ENCODE measurements at regions of chr15 and their contacts with region 1.

Region 1: GRCh38 chr15:20356444-20356910 is 185.1 kb downstream of the GOLGA6L6 start:
- H3K4me3 ChIP-seq: peak overlapping the region; percentile 19
- H3K27ac ChIP-seq: no peak overlapping the region
- H3K4me1 ChIP-seq: no peaks in the 10 kb centered on the region
- CTCF ChIP-seq: 0 out of 2 replicates have a peak, but pooled peaks have one; percentile 25

Region 2: GRCh38 chr15:20367093-20367492 is 10.6 kb after region 1 on chr15:
- CTCF ChIA-PET with region 1: interaction called, 11 read pairs
- POLR2A ChIA-PET with region 1: no interaction called
- H3K4me3 ChIP-seq: no peak overlapping the region
- H3K27ac ChIP-seq: no peak overlapping the region
- H3K4me1 ChIP-seq: no peaks in the 10 kb centered on the region
- CTCF ChIP-seq: no peak

Region 3: DNA sequence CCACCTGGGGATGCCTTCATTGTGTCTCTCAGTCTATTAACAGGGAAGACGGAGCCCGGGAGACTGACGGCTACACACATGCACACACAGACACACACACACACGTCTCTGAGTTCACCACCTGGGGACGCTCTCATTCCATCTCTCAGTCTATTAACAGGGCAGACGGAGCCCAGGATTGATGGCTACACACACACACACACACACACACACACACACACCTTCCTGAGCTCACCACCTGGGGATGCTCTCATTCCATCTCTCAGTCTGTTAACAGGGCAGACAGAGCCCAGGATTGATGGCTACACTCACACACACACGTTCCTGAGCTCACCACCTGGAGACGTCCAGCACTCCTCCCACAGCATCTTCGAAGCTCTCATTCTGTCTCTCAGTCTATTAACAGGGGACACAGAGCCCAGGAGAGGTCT is 1867.8 kb after region 1 on chr15:
- CTCF ChIA-PET with region 1: interaction called, 75 read pairs
- POLR2A ChIA-PET with region 1: interaction called, 3 read pairs
- H3K4me3 ChIP-seq: no peak overlapping the region
- H3K27ac ChIP-seq: no peak overlapping the region
- H3K4me1 ChIP-seq: no peaks in the 10 kb centered on the region
- CTCF ChIP-seq: no peak; the same call in 1 of the 2 replicates

Measured in HEK293 (cell line).